ENCODE measurements at regions of chr19 and their contacts with region 1.

Region 1: DNA sequence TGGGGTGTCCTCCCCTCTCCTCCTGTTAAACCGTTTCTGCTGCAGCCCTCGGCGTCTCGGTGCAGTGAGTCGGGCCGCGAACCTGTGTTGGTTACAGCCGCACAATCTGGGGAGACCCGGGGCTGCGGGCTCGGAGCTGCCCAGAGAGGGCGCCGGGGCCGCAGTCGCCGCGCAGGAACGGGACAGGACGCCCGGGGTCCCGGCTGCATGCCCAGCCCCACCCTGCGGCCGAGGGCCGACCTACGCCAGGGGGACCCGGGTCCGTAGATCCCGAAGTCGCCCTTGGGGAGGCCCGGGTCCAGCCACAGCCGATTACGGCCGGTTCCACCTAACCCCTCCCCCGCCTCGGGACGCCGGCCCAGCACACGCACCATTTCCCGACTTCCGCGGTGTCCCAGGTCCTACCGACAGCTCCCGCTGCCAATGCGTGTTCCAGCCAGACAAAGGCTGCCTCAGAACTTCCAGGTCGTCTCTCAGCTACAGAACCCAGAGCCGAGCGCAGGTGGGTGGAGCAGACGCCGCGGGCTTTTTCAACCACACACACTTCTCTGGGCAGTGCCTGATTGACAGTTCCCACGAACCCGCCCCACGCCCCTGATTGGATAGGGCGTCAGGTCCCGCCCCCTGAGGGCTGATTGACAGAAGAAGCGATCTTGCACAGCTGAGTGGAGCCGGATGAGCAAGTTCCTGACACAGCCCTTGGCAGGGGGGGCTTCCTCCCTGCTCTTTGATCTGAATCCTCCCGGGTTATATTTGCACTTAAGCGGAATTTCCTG is at the start of gene ZNF443:
- DNase-seq: peak; percentile 94
- ATAC-seq: peak; percentile 97
- H3K4me3 ChIP-seq: peak within 1 kb of the TSS; percentile 74
- H3K27ac ChIP-seq: peak within 1 kb of the TSS; percentile 56
- H3K4me1 ChIP-seq: no peaks in the 10 kb centered on the region
- H3K27me3 ChIP-seq: no peaks in the 10 kb centered on the region
- CTCF ChIP-seq: no peak
- EP300 ChIP-seq: no peak
- POLR2A ChIP-seq: peak; percentile 73
- RAD21 ChIP-seq: no peak
- polyA plus RNA-seq, gene ZNF443: 3.0 to 4.5 TPM

Region 2: DNA sequence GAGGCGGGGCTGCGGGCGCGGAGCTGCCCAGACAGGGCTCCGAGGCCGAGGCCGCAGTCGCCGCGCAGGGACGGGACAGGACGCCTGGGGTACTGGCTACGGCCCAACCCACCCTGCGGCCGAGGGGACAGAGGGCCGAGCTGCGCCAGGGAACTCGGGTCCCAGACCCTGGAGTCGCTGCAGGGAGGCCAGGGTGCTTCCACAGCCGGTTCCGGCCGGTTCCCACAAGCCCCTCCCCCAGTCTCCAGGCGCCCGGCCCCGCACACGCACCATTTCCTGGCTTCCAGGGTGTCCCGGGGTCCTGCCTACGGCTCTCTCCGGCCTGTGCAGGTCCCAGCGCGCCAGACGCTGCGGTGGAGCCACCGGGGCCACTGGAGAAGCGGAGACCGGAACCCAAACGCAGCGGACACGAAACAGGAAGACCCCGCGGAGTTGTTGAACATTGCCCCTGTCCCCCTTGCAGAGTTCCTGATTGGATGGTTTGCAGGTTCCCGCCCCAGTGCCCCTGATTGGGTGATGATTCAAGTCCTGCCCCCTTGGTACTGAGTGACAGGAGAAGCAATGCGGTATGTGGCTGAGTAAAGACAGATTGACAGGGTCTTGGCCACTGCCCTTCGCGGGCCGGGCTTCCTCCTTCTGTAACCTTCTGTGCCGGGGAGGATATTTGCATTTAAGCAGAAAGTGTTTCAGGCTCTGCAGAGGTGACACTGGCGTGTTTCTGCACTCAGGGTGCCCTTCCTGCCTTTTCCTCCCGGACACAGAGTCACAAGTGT is 110.5 kb after region 1 on chr19 and contains the start of gene ZNF564:
- CTCF ChIA-PET with region 1: no interaction called
- POLR2A ChIA-PET with region 1: interaction called, 4 read pairs
- RAD21 ChIA-PET with region 1: no interaction called
- SMC1A ChIA-PET with region 1: no interaction called
- in situ Hi-C with region 1: no loop called
- intact Hi-C with region 1: loop called (anchors 2 kb)
- DNase-seq: peak; percentile 99
- ATAC-seq: peak; percentile 99
- H3K4me3 ChIP-seq: peak within 1 kb of the TSS; percentile 88
- H3K27ac ChIP-seq: peak within 1 kb of the TSS; percentile 80
- H3K4me1 ChIP-seq: peaks cover 6% of the 10 kb centered on the region; the same call in 1 of the 2 replicates
- H3K27me3 ChIP-seq: no peaks in the 10 kb centered on the region
- CTCF ChIP-seq: no peak
- EP300 ChIP-seq: no peak
- POLR2A ChIP-seq: peak; percentile 93
- RAD21 ChIP-seq: no peak
- polyA plus RNA-seq, gene ZNF564: 1.5 to 1.8 TPM

Region 3: GRCh38 chr19:12596927-12597548 is 156.3 kb after region 1 on chr19:
- CTCF ChIA-PET with region 1: no interaction called
- POLR2A ChIA-PET with region 1: no interaction called
- RAD21 ChIA-PET with region 1: no interaction called
- SMC1A ChIA-PET with region 1: no interaction called
- in situ Hi-C with region 1: no loop called
- intact Hi-C with region 1: no loop called
- DNase-seq: no peak
- ATAC-seq: no peak
- H3K4me3 ChIP-seq: no peak overlapping the region
- H3K27ac ChIP-seq: no peak overlapping the region
- H3K4me1 ChIP-seq: no peaks in the 10 kb centered on the region
- H3K27me3 ChIP-seq: no peaks in the 10 kb centered on the region
- CTCF ChIP-seq: no peak
- EP300 ChIP-seq: no peak
- POLR2A ChIP-seq: no peak
- RAD21 ChIP-seq: no peak